GM13976 (cell line): ENCODE measurements at regions of chr6 and their contacts with region 1.

Region 1: GRCh38 chr6:11144393-11144851 is 32.9 kb upstream of the ERVFRD-1 start:
- DNase-seq: peak; percentile 82
- CTCF ChIP-seq: peak; percentile 94

Region 2: GRCh38 chr6:10995114-10995707 is 149.2 kb before region 1 on chr6:
- in situ Hi-C with region 1: no loop called
- DNase-seq: no peak
- CTCF ChIP-seq: no peak

Region 3: DNA sequence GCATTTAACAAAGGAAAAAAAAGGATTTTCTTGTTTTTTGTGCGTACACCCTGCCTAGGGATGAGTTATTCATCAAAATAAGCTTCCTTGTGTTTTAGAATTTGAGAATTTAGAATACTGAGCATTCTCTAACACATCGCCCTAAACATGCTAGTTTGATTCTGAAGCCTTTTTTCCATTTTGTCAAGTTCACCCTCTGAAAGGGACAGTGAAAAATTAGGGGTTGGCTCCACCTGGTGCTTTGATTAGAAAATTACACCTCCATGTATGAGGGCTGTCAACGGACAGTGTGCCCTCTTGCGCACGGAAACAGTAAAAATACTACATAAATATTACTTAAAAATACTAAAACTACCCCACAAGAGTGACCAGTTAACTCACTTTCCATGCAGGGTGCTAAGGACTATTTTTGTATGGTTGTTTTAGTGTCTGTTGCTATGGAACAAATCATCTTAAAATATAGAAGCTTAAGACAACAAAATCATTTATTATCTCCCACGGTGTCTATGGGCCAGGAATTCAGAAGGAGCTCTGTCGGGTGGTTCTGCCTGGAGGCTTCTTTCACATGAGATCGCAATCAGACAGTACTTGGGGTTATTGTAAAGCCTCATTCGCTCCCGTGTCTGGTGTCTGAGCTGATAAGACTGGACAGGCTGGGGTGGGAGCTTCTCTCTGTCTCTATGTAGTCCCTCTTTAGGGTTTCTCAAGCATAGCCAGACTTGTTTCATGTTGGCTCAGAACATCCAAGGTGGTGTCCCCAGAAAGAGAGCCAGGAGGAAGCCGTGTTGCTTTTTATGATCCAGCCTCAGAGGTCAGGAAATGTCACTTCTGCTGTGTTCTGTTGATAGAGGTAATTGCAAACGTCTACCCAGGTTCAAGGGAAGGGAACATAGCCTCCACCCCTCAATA is 352.0 kb after region 1 on chr6:
- in situ Hi-C with region 1: loop called (anchors 5 kb)
- DNase-seq: peak; percentile 67
- CTCF ChIP-seq: peak; percentile 65